Psoas muscle (tissue), 8 donors: ENCODE measurements at regions of chr15 and their contacts with region 1.

Region 1: GRCh38 chr15:34101366-34102175 is at the starts of genes EMC7 and PGBD4:
- DNase-seq: peak; percentile 99
- ATAC-seq: peak; percentile 99 to 100 (median 100)
- H3K4me3 ChIP-seq: peak within 1 kb of the TSS; percentile 93
- H3K27ac ChIP-seq: peak within 1 kb of the TSS; percentile 93
- H3K4me1 ChIP-seq: peaks cover 32% of the 10 kb centered on the region
- H3K27me3 ChIP-seq: no peaks in the 10 kb centered on the region
- CTCF ChIP-seq: no peak
- total RNA-seq, gene EMC7: 50.4 to 82.8 (median 65.1) TPM
- total RNA-seq, gene PGBD4: 1.4 to 2.1 (median 1.8) TPM

Region 2: GRCh38 chr15:34064438-34064837 is 37.1 kb before region 1 on chr15:
- intact Hi-C with region 1: loop called in 1 of 2 experiments (anchors 5 kb)
- DNase-seq: no peak
- ATAC-seq: no peak
- H3K4me3 ChIP-seq: no peak overlapping the region
- H3K27ac ChIP-seq: no peak overlapping the region
- H3K4me1 ChIP-seq: no peaks in the 10 kb centered on the region
- H3K27me3 ChIP-seq: no peaks in the 10 kb centered on the region
- CTCF ChIP-seq: no peak

Region 3: GRCh38 chr15:34179234-34179633 is 77.7 kb after region 1 on chr15:
- intact Hi-C with region 1: no loop called
- DNase-seq: no peak
- ATAC-seq: no peak
- H3K4me3 ChIP-seq: no peak overlapping the region
- H3K27ac ChIP-seq: no peak overlapping the region
- H3K4me1 ChIP-seq: no peaks in the 10 kb centered on the region
- H3K27me3 ChIP-seq: no peaks in the 10 kb centered on the region
- CTCF ChIP-seq: no peak

Region 4: GRCh38 chr15:34223904-34224596 is 122.5 kb after region 1 on chr15:
- intact Hi-C with region 1: loop called (anchors 2 kb)
- DNase-seq: no peak
- ATAC-seq: peak; percentile 13 to 50 (median 29)
- H3K4me3 ChIP-seq: peak overlapping the region; percentile 96
- H3K27ac ChIP-seq: peak overlapping the region; percentile 94
- H3K4me1 ChIP-seq: peaks cover 13% of the 10 kb centered on the region
- H3K27me3 ChIP-seq: no peaks in the 10 kb centered on the region
- CTCF ChIP-seq: no peak

Region 5: DNA sequence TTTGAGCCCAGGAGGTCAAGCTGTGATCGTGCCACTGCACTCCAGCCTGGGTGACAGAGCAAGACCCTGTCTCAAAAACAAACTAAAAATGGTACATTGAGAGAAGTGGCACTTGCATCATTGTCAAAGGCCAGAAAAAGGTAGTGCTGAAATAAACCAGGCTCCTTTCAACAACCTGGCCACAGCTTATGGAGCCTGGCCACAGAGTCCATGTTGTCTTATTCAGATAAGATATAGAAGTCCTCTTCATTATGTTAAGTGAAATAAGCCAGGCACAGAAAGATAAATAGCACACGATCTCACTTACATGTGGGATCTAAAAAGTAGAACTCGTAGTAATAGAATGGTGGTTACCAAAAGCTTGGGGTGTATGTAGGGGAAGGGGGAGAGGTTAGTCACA is 158.0 kb after region 1 on chr15:
- intact Hi-C with region 1: no loop called
- DNase-seq: no peak
- ATAC-seq: no peak
- H3K4me3 ChIP-seq: no peak overlapping the region
- H3K27ac ChIP-seq: no peak overlapping the region
- H3K4me1 ChIP-seq: no peaks in the 10 kb centered on the region
- H3K27me3 ChIP-seq: no peaks in the 10 kb centered on the region
- CTCF ChIP-seq: no peak

Region 6: DNA sequence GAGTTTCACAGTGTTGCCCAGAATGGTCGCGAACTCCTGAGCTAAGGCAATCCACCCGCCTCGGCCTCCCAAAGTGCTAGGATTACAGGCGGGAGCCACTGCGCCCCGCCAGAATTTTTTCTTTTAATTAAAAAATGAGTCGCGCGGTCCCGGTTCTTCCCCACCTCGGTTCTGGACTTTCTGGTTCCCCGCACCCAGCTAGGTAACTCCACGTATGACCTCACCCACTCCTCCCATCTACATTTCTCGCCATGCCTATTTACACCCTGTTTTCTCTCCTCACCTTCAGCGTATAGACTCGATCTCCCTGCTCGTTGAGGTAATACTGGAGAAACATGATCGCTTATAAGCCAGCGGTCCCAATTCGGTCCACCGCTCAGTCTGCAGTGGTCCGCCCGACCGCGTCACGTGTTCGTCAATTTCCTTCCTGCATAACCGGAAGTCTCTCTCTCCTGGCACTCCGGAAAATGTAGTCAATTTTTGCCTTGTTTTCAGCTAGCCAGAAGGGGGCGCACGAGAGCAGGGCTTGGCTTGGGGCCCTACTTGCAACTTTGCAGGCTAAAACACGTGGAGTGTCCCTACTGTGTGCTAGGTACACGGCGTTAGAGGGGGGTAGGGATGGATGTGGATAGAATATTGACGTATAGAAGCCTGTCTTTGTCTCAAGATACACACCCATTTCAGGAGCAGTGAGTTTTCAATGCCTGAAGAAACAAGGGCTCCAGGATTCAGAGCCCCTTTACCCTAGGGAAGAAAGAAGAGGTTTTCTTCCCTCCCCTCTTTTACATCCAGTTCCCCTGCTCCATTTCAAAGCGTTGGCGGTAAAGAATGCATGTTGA is 241.4 kb after region 1 on chr15 and contains the starts of genes NOP10 and NUTM1:
- intact Hi-C with region 1: loop called in 1 of 2 experiments (anchors 5 kb)
- DNase-seq: peak; percentile 90 to 95
- ATAC-seq: peak; percentile 94 to 97 (median 96)
- H3K4me3 ChIP-seq: peak within 1 kb of the TSS; percentile 84
- H3K27ac ChIP-seq: peak within 1 kb of the TSS; percentile 77
- H3K4me1 ChIP-seq: peaks cover 10% of the 10 kb centered on the region
- H3K27me3 ChIP-seq: no peaks in the 10 kb centered on the region
- CTCF ChIP-seq: peak; percentile 93
- total RNA-seq, gene NOP10: 123 to 146 (median 134) TPM
- total RNA-seq, gene NUTM1: not detected